K562 (cell line): ENCODE measurements at regions of chr10 and their contacts with region 1.

Region 1: DNA sequence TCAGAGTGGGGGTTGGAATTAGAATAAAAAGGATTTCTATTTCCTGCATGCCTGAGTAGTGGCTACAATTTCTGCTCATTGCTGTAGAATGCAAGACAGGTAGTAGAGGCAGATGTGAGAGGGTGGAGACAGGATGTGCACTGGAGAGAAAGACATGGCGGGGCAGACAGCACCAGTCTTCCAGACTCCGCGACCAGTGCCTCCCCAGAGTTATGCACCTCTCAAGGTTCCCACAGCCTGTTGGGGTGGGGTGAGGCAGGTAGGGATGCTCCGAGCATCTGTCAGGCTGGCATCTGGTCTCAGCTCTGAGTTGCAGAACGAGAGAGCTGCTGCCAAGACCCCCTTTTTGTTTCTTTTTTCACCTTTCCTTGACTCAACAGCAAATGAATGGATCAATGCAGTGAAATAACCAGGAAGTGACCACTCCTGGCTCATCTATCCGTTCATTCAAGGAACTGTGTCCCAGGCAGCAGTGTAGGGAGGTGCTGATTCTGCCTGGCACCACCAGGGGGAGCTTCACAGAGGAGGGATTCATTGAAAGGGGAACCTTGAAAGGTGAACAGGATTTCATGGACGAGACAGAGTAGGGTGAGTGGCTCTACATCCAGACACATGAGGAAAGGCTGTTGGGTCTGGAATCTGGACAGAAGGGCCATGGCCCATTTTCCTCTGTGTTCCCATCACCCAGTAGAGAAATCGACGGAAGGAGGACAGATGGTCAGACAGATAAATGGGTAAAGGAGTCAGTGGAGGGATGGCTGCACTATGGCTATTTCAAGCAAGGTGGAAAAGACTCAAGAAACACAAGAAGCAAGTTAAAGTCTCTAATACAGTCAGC is 17.2 kb upstream of the SLC18A3 start:
- DNase-seq: peak; percentile 75 to 79 (median 76)
- ATAC-seq: peak; percentile 90
- H3K4me3 ChIP-seq: no peak overlapping the region
- H3K27ac ChIP-seq: no peak overlapping the region
- H3K4me1 ChIP-seq: peaks cover 0 to 3% of the 10 kb centered on the region in 2 experiments; a peak in 2 of 5 replicates
- H3K27me3 ChIP-seq: peaks cover 0 to 16% of the 10 kb centered on the region in 2 experiments; a peak in 1 of 5 replicates
- CTCF ChIP-seq: peak; percentile 83 to 96 (median 90)
- EP300 ChIP-seq: no peak
- POLR2A ChIP-seq: no peak
- RAD21 ChIP-seq: peak; percentile 36 to 71; a peak in 3 of 4 replicates

Region 2: DNA sequence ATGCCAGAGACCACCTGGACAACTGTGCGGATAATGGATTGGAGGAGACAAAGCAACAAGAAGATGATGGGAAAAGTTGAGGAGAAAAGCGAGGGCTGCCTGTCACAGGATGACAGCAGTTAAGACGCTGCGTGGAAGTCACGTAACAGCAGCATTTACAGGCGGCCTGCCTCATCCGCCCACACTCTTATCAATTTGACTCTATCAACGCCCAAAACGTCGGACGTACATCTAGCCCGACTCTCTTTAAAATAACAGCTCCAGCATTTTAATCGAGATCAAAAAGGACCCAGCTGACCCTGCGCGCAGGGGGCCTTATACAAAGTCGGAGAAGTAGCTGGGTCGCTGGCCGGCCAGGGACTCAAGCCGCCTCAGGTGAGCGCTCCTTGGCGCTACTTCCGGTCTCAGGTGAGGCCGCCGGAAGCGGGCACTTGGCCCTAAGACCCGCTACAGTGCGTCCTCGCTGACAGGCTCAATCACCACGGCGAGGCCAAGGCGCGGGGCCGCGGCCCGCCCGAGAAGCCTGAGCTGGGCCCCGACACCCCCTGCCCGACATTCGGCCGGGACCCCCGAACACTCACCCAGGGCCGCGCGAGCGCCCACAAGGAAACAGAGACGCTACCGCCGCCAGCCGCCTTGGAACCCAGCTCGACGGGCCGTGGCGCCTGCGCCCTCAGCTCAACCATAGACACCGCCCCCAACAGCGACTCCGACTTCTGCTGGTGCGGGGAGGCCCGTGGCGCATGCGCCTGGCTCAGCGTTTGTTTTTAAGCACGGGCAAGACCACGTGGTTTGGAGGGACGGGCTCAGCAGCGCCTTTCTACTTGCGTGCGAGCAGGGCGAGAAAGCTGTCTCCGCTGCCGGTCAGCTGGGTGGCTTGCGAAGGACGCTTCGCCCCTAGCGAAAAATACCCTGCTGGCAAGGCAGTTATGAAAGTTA is 54.3 kb before region 1 on chr10 and contains the start of gene ERCC6:
- CTCF ChIA-PET with region 1: no interaction called
- POLR2A ChIA-PET with region 1: no interaction called
- in situ Hi-C with region 1: no loop called
- intact Hi-C with region 1: no loop called
- DNase-seq: peak; percentile 98 to 99 (median 98)
- ATAC-seq: peak; percentile 97
- H3K4me3 ChIP-seq: peak within 1 kb of the TSS; percentile 55
- H3K27ac ChIP-seq: peak within 1 kb of the TSS; percentile 72
- H3K4me1 ChIP-seq: peaks cover 20 to 27% of the 10 kb centered on the region in 2 experiments; a peak in 4 of 5 replicates
- H3K27me3 ChIP-seq: no peaks in the 10 kb centered on the region
- CTCF ChIP-seq: peak in 2 of 3 experiments; percentile 24 to 26; a peak in 2 of 6 replicates
- EP300 ChIP-seq: no peak
- POLR2A ChIP-seq: peak; percentile 93
- RAD21 ChIP-seq: no peak
- polyA plus RNA-seq, gene ERCC6: 7.8 to 13.4 TPM

Region 3: DNA sequence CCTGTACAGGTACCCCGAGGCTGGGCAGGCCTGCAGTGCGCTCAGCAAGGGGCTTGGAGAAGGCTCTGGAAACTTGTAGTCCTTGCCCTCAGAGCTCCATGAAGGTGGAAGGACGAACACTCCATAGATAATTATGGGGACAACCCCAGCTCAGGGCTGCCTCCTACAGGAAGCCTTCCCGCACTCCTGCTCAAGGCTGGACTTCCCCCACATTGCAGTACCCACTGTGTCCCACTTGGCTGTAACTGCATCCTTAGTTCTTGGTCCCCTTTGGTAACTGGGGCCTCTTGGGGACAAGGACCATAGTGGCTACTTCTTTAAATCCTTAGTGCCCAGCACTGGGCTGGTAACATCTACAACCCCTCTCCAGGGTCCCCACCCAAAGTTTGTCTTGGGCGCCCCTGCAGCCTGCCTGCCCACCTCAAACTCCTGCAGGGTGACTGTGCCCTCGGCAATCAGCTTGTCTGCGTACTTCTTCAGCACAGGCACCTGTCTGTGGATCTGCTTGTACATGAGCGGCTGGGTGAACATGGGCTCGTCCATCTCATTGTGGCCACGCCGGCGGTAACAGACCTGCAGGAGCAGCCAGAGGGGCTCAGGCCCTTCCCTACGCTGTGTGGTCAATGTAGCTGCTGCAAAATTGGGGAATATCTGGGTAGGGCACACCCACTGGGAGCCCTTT is 152.1 kb after region 1 on chr10:
- CTCF ChIA-PET with region 1: no interaction called
- POLR2A ChIA-PET with region 1: no interaction called
- in situ Hi-C with region 1: no loop called
- intact Hi-C with region 1: loop called (anchors 5 kb)
- DNase-seq: peak in 1 of 4 experiments; percentile 23
- ATAC-seq: peak; percentile 71
- H3K4me3 ChIP-seq: no peak overlapping the region
- H3K27ac ChIP-seq: no peak overlapping the region
- H3K4me1 ChIP-seq: peaks cover 0 to 5% of the 10 kb centered on the region in 2 experiments; a peak in 1 of 5 replicates
- H3K27me3 ChIP-seq: peaks cover 5 to 46% of the 10 kb centered on the region in 2 experiments; a peak in 4 of 5 replicates
- CTCF ChIP-seq: peak; percentile 34 to 79 (median 45); a peak in 5 of 6 replicates
- EP300 ChIP-seq: no peak
- POLR2A ChIP-seq: no peak
- RAD21 ChIP-seq: no peak; a peak in 1 of 4 replicates

Region 4: DNA sequence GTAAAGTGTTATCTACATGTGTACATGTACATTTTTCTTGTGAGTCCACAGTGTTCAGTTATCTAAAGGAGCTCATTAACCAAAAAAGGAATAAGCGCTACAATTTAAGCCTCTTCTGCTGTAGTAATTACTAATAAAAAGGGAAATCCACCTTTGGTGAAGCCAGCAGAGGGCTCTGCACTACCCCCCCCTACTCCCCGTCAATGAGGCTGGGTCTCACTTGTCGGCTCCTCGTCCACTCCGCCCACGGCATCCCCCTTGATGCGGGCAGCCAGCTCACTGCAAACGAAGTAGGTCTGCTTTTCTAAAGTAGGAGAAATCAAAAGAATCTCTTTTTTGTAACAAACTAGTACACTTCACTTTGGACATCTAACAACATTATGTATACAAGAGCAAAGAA is 470.2 kb after region 1 on chr10:
- CTCF ChIA-PET with region 1: no interaction called
- POLR2A ChIA-PET with region 1: no interaction called
- in situ Hi-C with region 1: no loop called
- intact Hi-C with region 1: loop called (anchors 10 kb)
- DNase-seq: peak; percentile 13 to 39 (median 22)
- ATAC-seq: peak; percentile 52
- H3K4me3 ChIP-seq: no peak overlapping the region
- H3K27ac ChIP-seq: no peak overlapping the region
- H3K4me1 ChIP-seq: no peaks in the 10 kb centered on the region
- H3K27me3 ChIP-seq: peaks cover 9% of the 10 kb centered on the region in 2 experiments; a peak in 4 of 5 replicates
- CTCF ChIP-seq: peak; percentile 23 to 44 (median 31); a peak in 3 of 6 replicates
- EP300 ChIP-seq: no peak
- POLR2A ChIP-seq: no peak
- RAD21 ChIP-seq: 0 out of 4 replicates have a peak, but pooled peaks of 1 of the 2 experiments have one; percentile 5

Region 5: GRCh38 chr10:50224330-50224952 is 631.5 kb after region 1 on chr10:
- CTCF ChIA-PET with region 1: interaction called, 6 read pairs
- POLR2A ChIA-PET with region 1: no interaction called
- in situ Hi-C with region 1: loop called (anchors 25 kb)
- intact Hi-C with region 1: loop called (anchors 1 kb)
- DNase-seq: peak in 2 of 4 experiments; percentile 66 to 85
- ATAC-seq: peak; percentile 98
- H3K4me3 ChIP-seq: no peak overlapping the region
- H3K27ac ChIP-seq: no peak overlapping the region
- H3K4me1 ChIP-seq: no peaks in the 10 kb centered on the region; a peak in 1 of 5 replicates
- H3K27me3 ChIP-seq: no peaks in the 10 kb centered on the region
- CTCF ChIP-seq: peak; percentile 84 to 95 (median 86)
- EP300 ChIP-seq: no peak
- POLR2A ChIP-seq: no peak
- RAD21 ChIP-seq: peak; percentile 85 to 93

Region 6: GRCh38 chr10:50231515-50232260 is 638.7 kb after region 1 on chr10:
- CTCF ChIA-PET with region 1: interaction called, 3 read pairs
- POLR2A ChIA-PET with region 1: no interaction called
- in situ Hi-C with region 1: loop called (anchors 25 kb)
- intact Hi-C with region 1: no loop called
- DNase-seq: no peak
- ATAC-seq: no peak
- H3K4me3 ChIP-seq: no peak overlapping the region
- H3K27ac ChIP-seq: no peak overlapping the region
- H3K4me1 ChIP-seq: peaks cover 0 to 6% of the 10 kb centered on the region in 2 experiments; a peak in 2 of 5 replicates
- H3K27me3 ChIP-seq: no peaks in the 10 kb centered on the region
- CTCF ChIP-seq: no peak
- EP300 ChIP-seq: no peak
- POLR2A ChIP-seq: no peak
- RAD21 ChIP-seq: no peak

Region 7: DNA sequence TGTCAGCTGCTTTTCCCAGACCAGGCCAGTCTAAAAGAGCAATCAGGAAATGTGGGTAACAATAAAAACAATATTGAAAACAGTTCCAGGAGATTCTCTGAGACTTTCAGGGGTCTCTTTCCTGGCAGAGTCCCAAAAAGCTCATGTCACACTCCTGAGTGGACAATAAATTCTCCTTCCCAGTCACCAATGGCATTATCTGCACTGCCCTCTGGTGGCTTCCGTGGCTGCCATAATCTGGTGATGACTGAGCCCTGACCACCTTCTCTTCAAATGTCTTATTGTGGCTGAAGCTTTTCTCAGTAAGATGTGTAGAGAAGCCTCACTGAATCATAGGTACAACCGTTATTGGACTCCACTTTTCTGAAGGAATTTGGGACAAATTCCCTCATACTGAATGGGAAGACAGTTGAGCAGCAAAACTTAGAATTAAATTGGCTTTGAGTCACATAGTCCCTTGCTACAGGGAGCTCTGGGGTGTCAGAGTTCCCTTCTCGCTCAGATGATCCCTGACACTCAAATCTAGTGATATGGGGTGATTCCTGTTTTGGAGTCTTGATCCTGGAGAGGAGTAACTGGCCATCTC is 682.8 kb after region 1 on chr10:
- CTCF ChIA-PET with region 1: no interaction called
- POLR2A ChIA-PET with region 1: no interaction called
- in situ Hi-C with region 1: no loop called
- intact Hi-C with region 1: loop called (anchors 2 kb)
- DNase-seq: peak; percentile 50 to 88 (median 72)
- ATAC-seq: peak; percentile 91
- H3K4me3 ChIP-seq: no peak overlapping the region
- H3K27ac ChIP-seq: no peak overlapping the region
- H3K4me1 ChIP-seq: peaks cover 13 to 22% of the 10 kb centered on the region in 2 experiments; a peak in 4 of 5 replicates
- H3K27me3 ChIP-seq: no peaks in the 10 kb centered on the region
- CTCF ChIP-seq: peak; percentile 86 to 94 (median 93)
- EP300 ChIP-seq: 0 out of 2 replicates have a peak, but pooled peaks have one; percentile 21
- POLR2A ChIP-seq: no peak
- RAD21 ChIP-seq: peak; percentile 71 to 89